ENCODE measurements at regions of chr2 and their contacts with region 1.

Region 1: GRCh38 chr2:240851078-240851991 is 17.3 kb upstream of the AGXT start:
- DNase-seq: peak; percentile 80 to 95 (median 88)
- H3K4me3 ChIP-seq: no peak overlapping the region
- H3K27ac ChIP-seq: no peak overlapping the region
- H3K4me1 ChIP-seq: no peaks in the 10 kb centered on the region
- H3K27me3 ChIP-seq: no peaks in the 10 kb centered on the region
- CTCF ChIP-seq: peak; percentile 80 to 96 (median 94)
- POLR2A ChIP-seq: no peak

Region 2: GRCh38 chr2:240983361-240983995 is 132.1 kb after region 1 on chr2:
- intact Hi-C with region 1: loop called in 1 of 2 experiments (anchors 10 kb)
- DNase-seq: peak in 5 of 7 donors; percentile 20 to 46 (median 29)
- H3K4me3 ChIP-seq: no peak overlapping the region
- H3K27ac ChIP-seq: no peak overlapping the region
- H3K4me1 ChIP-seq: peaks cover 0 to 11% of the 10 kb centered on the region in 2 donors
- H3K27me3 ChIP-seq: no peaks in the 10 kb centered on the region
- CTCF ChIP-seq: peak in 5 of 6 experiments; percentile 26 to 57 (median 39)
- POLR2A ChIP-seq: no peak

Region 3: DNA sequence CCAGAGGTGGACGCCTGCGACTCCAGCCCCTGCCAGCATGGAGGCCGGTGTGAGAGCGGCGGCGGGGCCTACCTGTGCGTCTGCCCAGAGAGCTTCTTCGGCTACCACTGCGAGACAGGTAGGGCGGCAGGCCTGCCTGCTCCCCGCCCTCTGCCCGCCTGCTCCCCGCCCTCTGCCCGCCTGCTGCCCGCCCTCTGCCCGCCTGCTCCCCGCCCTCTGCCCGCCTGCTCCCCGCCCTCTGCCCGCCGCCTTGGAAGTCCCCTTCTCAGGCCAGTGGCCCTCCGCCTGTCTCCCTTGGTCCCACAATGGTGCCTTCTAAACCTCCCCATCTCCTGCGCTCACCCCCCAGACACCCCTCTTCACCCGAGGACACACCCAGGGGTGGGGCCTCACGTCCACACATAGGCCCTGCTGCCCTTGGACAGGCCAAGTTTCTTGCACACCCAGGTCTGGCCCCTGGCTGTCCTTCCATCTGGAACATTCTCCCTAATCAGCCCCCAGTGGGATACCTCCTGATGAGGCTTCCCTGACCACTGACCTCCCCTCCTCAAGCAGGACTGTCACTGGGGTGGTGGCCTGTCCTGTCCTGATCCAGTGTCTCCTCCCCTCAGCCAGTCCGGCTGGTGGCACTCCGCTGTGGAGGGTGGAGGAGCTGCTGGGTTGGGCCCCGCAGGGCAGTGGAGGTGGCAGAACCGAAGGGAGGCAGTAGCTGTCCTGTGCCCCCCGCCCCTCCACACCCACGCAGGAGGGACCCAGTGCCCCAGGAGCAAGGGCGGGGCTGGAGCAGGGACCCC is 212.9 kb after region 1 on chr2:
- intact Hi-C with region 1: loop called in 1 of 2 experiments (anchors 10 kb)
- DNase-seq: peak in 6 of 7 donors; percentile 42 to 69 (median 52)
- H3K4me3 ChIP-seq: peak overlapping the region in 1 of 4 donors; percentile 36
- H3K27ac ChIP-seq: no peak overlapping the region
- H3K4me1 ChIP-seq: peaks cover 0 to 4% of the 10 kb centered on the region in 2 donors
- H3K27me3 ChIP-seq: no peaks in the 10 kb centered on the region
- CTCF ChIP-seq: no peak
- POLR2A ChIP-seq: no peak

Region 4: DNA sequence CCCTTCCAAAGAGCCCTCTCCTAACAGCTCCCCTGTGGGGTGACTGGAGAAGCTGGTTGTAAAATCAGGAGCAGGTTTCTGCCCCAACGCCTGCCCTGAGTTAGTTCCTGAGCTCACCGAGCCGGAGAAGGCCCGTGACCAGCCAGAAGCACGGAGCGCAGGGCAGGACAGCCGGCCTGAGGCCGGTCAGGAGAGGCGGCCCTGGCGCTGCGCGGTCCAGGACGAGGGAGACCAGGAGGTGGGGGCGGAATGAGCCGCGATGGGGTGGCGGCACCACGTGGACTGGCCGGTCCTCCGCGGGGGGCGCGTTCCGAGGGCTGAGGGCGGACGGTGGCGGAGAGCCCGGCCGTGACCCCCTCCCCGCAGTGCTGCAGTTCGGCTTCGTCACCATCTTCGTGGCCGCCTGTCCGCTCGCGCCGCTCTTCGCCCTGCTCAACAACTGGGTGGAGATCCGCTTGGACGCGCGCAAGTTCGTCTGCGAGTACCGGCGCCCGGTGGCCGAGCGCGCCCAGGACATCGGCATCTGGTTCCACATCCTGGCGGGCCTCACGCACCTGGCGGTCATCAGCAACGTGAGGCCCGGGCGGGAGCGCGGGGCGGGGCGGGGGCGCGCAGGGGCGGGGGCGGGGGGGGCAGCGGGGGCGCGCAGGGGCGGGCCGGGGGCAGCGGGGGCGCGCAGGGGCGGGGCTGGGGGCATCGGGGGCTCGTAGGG is 366.1 kb after region 1 on chr2:
- intact Hi-C with region 1: loop called in 1 of 2 experiments (anchors 10 kb)
- DNase-seq: peak; percentile 74 to 87 (median 85)
- H3K4me3 ChIP-seq: peak overlapping the region in 2 of 4 donors; percentile 14 to 64
- H3K27ac ChIP-seq: peak overlapping the region; percentile 4 to 97 (median 82)
- H3K4me1 ChIP-seq: peaks cover 11% of the 10 kb centered on the region in 2 donors
- H3K27me3 ChIP-seq: no peaks in the 10 kb centered on the region
- CTCF ChIP-seq: peak in 2 of 6 experiments; percentile 12 to 29
- POLR2A ChIP-seq: peak in 1 of 2 donors; percentile 56

Measured in adrenal gland (tissue), 19 donors.